MCF 10A (cell line): ENCODE measurements at regions of chr4 and their contacts with region 1.

Region 1: GRCh38 chr4:10554694-10555093 is 97.5 kb upstream of the ZNF518B start:
- DNase-seq: peak; percentile 79
- H3K4me3 Mint-ChIP-seq: no peak overlapping the region
- H3K27ac Mint-ChIP-seq: no peak overlapping the region
- H3K4me1 Mint-ChIP-seq: no peaks in the 10 kb centered on the region
- H3K27me3 Mint-ChIP-seq: no peaks in the 10 kb centered on the region
- CTCF ChIP-seq: peak; percentile 53

Region 2: DNA sequence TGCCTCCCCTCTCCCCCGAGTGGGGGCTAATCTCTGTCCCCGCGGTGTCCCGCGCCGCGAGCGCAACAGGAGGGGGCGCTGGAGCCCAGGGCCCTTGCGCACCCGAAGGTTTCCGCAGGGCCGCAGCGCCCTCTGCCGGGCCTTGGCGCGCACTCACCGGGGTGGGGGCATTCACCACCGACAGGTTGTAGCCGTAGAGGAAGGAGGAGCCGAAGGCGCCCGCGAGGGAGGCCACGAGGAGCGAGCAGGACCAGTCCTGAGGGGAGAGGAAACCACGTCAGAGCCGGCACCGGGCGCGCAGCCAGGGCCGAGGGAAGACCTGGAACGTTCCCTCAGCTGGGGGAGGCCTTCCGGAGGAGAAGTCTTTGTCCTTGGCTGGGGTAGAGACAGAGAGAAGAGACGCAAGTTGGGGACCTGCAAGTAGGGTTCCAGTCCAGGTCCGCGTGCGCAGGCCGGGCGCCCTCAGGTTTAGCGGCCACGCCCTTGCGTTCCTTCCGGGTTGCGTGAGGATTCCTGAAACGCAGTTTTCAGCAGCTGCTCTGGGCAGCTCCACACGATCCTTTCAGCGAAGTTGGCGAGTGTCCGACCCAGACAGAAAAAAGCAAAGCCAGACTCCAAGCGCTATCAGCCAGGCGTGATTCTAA is 535.8 kb before region 1 on chr4:
- CTCF ChIA-PET with region 1: interaction called, 4 read pairs
- POLR2A ChIA-PET with region 1: no interaction called
- intact Hi-C with region 1: loop called (anchors 5 kb)
- DNase-seq: peak; percentile 98
- H3K4me3 Mint-ChIP-seq: peak overlapping the region; percentile 80
- H3K27ac Mint-ChIP-seq: peak overlapping the region; percentile 97
- H3K4me1 Mint-ChIP-seq: peaks cover 48% of the 10 kb centered on the region
- H3K27me3 Mint-ChIP-seq: no peaks in the 10 kb centered on the region
- CTCF ChIP-seq: peak; percentile 99

Region 3: GRCh38 chr4:10157478-10158332 is 397.0 kb before region 1 on chr4:
- CTCF ChIA-PET with region 1: interaction called, 77 read pairs
- POLR2A ChIA-PET with region 1: no interaction called
- intact Hi-C with region 1: loop called (anchors 1 kb)
- DNase-seq: peak; percentile 72
- H3K4me3 Mint-ChIP-seq: no peak overlapping the region
- H3K27ac Mint-ChIP-seq: no peak overlapping the region
- H3K4me1 Mint-ChIP-seq: peaks cover 6% of the 10 kb centered on the region
- H3K27me3 Mint-ChIP-seq: no peaks in the 10 kb centered on the region
- CTCF ChIP-seq: peak; percentile 55

Region 4: DNA sequence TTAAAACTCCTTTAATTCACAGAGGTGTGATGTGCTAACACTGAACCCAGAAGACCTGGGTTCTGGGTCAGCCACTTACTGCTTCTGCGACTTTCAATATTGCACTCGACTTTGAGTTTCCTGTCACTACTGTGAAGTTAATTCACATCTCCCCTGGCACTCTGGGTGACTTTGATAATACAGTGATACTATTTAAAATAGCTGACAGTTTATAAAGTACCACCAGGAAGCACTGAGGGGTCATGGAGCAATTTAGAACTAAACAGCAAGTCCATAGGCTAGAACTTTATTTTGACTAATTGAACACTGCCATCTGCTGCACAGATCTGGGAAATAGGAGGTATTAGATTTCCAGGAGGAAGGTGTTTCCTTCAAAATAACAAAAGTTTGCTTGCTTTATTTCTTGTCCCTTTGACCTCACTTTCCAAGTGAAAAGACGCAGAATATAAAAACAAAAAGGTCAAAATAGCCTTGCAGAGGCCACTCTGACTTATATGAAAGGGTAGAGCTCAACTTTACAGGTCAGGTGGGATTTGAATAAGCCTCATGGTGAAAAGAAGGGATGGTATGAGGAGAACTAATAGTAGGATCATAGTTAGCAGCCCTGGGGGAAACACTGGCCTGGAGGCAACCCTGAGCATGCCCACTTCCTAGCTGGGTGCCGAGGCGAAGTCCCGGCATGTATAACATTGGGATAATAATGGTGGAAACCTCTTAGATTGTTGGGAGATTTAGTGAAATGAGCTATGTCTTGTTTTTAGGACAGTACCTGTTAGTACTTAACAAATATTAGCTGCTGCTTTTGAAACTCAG is 150.9 kb before region 1 on chr4:
- CTCF ChIA-PET with region 1: interaction called, 17 read pairs
- POLR2A ChIA-PET with region 1: no interaction called
- intact Hi-C with region 1: no loop called
- DNase-seq: peak; percentile 55
- H3K4me3 Mint-ChIP-seq: no peak overlapping the region
- H3K27ac Mint-ChIP-seq: no peak overlapping the region
- H3K4me1 Mint-ChIP-seq: peaks cover 4% of the 10 kb centered on the region
- H3K27me3 Mint-ChIP-seq: no peaks in the 10 kb centered on the region
- CTCF ChIP-seq: peak; percentile 36

Region 5: GRCh38 chr4:10582059-10582686 is 27.5 kb after region 1 on chr4:
- CTCF ChIA-PET with region 1: interaction called, 10 read pairs
- POLR2A ChIA-PET with region 1: no interaction called
- intact Hi-C with region 1: no loop called
- DNase-seq: peak; percentile 69
- H3K4me3 Mint-ChIP-seq: no peak overlapping the region
- H3K27ac Mint-ChIP-seq: no peak overlapping the region
- H3K4me1 Mint-ChIP-seq: no peaks in the 10 kb centered on the region
- H3K27me3 Mint-ChIP-seq: no peaks in the 10 kb centered on the region
- CTCF ChIP-seq: peak; percentile 71

Region 6: GRCh38 chr4:11720292-11720691 is 1165.6 kb after region 1 on chr4:
- CTCF ChIA-PET with region 1: interaction called, 4 read pairs
- POLR2A ChIA-PET with region 1: no interaction called
- intact Hi-C with region 1: loop called (anchors 1 kb)
- DNase-seq: peak; percentile 63
- H3K4me3 Mint-ChIP-seq: no peak overlapping the region
- H3K27ac Mint-ChIP-seq: no peak overlapping the region
- H3K4me1 Mint-ChIP-seq: no peaks in the 10 kb centered on the region
- H3K27me3 Mint-ChIP-seq: no peaks in the 10 kb centered on the region
- CTCF ChIP-seq: peak; percentile 82